ENCODE measurements at regions of chrX and their contacts with region 1.

Region 1: DNA sequence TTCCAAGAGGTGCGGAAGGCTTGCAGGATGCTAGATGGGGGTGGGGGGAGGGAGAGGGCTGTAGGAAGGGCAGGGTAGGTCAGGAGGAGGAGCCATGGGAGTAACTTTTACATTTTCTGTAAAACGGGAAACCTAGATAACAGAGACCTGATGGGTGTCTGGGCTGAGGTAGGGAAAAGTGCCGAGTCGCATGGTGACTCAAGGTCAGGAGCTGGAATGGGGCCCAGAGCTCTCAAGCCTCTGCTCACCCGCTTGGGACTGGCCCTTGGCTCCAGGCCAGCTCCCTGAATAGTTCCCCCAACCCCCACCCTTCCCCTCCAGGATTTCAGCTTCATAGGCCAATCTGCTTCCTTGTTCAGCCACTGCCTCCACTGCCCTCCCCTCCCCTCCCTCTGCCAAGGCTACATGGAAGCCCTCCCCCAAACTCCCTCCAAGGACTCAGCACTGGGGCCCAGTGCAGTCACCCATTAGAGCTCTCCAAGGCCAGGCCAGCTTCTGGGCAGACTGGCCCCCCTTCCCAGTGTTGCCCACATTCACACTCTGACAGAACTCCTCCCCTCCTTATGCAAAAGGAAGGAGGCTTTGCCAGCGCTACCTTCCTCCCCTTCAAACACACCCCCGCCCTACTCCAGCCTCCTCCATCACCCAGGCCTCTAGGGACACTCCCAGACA is 43.6 kb downstream of the TSC22D3 start:
- DNase-seq: peak; percentile 89 to 95 (median 94)
- H3K4me3 ChIP-seq: no peak overlapping the region
- H3K27ac ChIP-seq: peak overlapping the region in 1 of 2 donors; percentile 24
- H3K4me1 ChIP-seq: peaks cover 18% of the 10 kb centered on the region
- H3K27me3 ChIP-seq: no peaks in the 10 kb centered on the region
- CTCF ChIP-seq: peak in 1 of 3 donors; percentile 3
- EP300 ChIP-seq: no peak
- POLR2A ChIP-seq: no peak

Region 2: GRCh38 chrX:107766470-107767150 is 34.6 kb after region 1 on chrX:
- intact Hi-C with region 1: loop called in 1 of 4 experiments (anchors 5 kb)
- DNase-seq: peak; percentile 73 to 81 (median 79)
- H3K4me3 ChIP-seq: no peak overlapping the region
- H3K27ac ChIP-seq: peak overlapping the region in 1 of 2 donors; percentile 63
- H3K4me1 ChIP-seq: no peaks in the 10 kb centered on the region
- H3K27me3 ChIP-seq: no peaks in the 10 kb centered on the region
- CTCF ChIP-seq: no peak
- EP300 ChIP-seq: no peak
- POLR2A ChIP-seq: no peak